Caco-2 (cell line): ENCODE measurements at regions of chr9 and their contacts with region 1.

Region 1: DNA sequence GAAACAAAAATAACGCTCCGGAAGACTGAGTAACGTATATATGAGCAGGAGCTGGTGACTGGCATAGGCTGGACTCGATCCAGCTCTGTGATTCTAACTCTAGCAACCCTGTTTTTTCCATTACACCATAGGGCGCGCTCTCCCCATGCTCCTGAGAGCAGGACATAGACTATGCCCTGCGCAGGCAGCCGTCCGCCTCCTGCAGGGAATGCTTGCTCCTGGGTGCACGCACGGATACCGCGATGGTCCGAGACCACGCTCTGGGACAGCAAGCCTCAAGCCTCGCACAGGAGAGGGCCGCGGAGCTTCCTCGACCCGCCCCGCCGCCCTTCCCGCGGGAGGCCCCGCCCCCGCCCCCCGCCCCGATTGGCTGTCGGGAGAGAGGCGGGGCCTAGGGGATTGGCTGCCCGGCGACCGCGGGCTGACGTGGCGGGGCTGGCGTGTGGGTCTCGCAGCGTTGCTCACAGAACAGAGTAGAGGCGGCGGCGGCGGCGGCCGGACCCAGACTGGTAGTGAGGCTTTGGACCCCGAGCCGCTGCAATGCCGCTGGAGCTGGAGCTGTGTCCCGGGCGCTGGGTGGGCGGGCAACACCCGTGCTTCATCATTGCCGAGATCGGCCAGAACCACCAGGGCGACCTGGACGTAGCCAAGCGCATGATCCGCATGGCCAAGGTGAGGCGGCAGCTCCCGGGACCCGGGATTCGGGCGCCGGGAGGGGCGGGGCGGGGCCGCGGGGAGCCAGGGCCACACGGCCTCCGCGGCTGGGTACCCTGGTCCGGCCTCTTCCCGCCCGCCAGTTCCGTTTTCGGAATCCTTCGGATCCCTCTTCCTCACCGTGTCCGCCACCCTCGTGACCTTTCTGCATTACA is at the start of gene NANS:
- DNase-seq: peak; percentile 95 to 97
- H3K4me3 ChIP-seq: peak within 1 kb of the TSS; percentile 79
- H3K4me3 Mint-ChIP-seq: peak within 1 kb of the TSS; percentile 93
- H3K27ac Mint-ChIP-seq: peak within 1 kb of the TSS; percentile 92
- H3K4me1 ChIP-seq: peaks cover 7% of the 10 kb centered on the region
- H3K4me1 Mint-ChIP-seq: no peaks in the 10 kb centered on the region
- H3K27me3 ChIP-seq: no peaks in the 10 kb centered on the region
- H3K27me3 Mint-ChIP-seq: no peaks in the 10 kb centered on the region
- CTCF ChIP-seq: peak in 1 of 2 experiments; percentile 18
- total RNA-seq, gene NANS: 68.7 and 71.7 TPM in 2 replicates

Region 2: DNA sequence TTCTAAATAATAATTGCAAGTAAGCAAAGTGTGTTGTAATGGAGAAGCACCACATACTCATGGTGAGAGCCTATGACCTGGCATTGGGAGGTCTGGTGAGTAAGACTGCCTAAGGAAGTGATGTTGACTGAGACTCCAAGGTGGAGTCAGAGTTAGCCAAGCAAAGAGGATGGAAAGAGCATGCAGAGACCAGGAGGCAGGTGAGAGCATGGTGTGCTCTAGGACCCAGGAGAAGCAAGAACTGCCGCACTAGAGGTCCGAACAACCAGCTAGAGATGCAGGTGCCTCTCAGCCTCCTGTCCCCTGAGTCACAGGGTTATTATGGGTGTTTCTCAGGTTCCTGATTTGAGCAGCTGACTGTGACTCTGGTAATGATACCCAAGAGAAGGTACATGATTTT is 46.1 kb before region 1 on chr9:
- CTCF ChIA-PET with region 1: no interaction called
- POLR2A ChIA-PET with region 1: no interaction called
- intact Hi-C with region 1: loop called (anchors 1 kb)
- DNase-seq: no peak
- H3K4me3 ChIP-seq: no peak overlapping the region
- H3K4me3 Mint-ChIP-seq: no peak overlapping the region
- H3K27ac Mint-ChIP-seq: no peak overlapping the region
- H3K4me1 ChIP-seq: no peaks in the 10 kb centered on the region
- H3K4me1 Mint-ChIP-seq: no peaks in the 10 kb centered on the region
- H3K27me3 ChIP-seq: no peaks in the 10 kb centered on the region
- H3K27me3 Mint-ChIP-seq: no peaks in the 10 kb centered on the region
- CTCF ChIP-seq: no peak

Region 3: GRCh38 chr9:98195671-98196070 is 139.2 kb after region 1 on chr9:
- CTCF ChIA-PET with region 1: no interaction called
- POLR2A ChIA-PET with region 1: no interaction called
- intact Hi-C with region 1: no loop called
- DNase-seq: no peak
- H3K4me3 ChIP-seq: no peak overlapping the region
- H3K4me3 Mint-ChIP-seq: no peak overlapping the region
- H3K27ac Mint-ChIP-seq: no peak overlapping the region
- H3K4me1 ChIP-seq: peaks cover 9% of the 10 kb centered on the region
- H3K4me1 Mint-ChIP-seq: peaks cover 15% of the 10 kb centered on the region
- H3K27me3 ChIP-seq: no peaks in the 10 kb centered on the region
- H3K27me3 Mint-ChIP-seq: no peaks in the 10 kb centered on the region
- CTCF ChIP-seq: no peak